GM18951 (cell line): ENCODE measurements at regions of chr3 and their contacts with region 1.

Region 1: GRCh38 chr3:50542177-50543034 is 25.1 kb downstream of the C3orf18 start:
- POLR2A ChIP-seq: no peak

Region 2: GRCh38 chr3:50347194-50347918 is 195.1 kb before region 1 on chr3:
- in situ Hi-C with region 1: loop called (anchors 10 kb)
- POLR2A ChIP-seq: no peak

Region 3: DNA sequence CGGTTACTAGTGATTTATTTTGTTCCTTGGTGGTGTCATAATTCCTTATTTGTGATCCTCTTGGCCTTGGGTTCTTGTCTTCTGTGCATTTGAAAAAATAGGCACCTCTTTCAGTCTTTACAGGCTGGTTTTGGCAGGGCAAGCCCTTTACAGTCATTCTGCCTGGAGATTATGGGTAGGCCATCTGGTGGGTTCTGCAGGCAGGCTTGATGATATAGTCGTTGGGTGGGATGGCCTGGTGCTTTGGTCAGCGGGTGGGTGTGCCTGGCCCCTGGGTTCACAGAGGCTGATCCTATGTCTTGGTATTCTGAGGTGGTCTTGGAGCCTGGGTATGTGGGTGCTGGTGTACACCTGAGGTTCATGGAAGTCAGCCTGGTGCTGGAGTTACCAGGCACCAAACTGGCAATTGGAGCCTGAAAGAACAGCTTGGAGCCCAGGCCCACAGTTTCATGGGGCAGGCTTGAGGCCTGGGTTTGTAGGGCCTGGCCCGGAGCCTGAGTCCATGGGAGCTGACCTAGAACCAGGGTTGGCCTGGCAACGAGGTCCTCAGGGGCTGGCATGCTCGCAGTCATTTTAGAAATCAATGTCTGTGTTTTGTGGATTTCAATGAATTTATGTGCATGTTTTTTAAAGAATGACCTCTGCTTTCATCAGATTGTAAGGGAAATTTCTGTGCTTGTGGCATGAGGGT is 195.6 kb after region 1 on chr3:
- in situ Hi-C with region 1: no loop called
- POLR2A ChIP-seq: no peak

Region 4: DNA sequence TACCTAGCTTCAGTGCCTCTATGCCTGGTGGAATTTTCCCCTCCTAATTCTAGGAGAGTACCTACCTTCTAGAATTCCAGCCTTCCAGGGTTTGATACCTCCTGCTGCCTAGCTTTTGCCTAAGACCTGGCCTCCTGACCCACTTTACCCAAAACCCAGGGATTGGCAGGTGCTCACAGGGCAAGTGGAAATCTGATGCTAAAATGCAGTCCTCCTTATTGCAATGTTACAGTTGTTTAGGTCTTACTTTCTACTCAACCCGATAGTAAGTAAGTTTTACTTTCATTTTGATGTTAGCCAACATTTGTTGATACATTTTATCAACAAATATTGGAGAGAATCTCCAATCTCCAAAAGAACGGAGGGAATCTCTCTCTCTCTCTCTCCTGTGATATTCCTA is 408.2 kb after region 1 on chr3:
- in situ Hi-C with region 1: no loop called
- POLR2A ChIP-seq: no peak